Posterior cingulate gyrus (tissue), 11 donors: ENCODE measurements at regions of chr1 and their contacts with region 1.

Region 1: GRCh38 chr1:203861379-203862184 is at the start of gene SNRPE:
- DNase-seq: peak; percentile 93 to 99 (median 96)

Region 2: DNA sequence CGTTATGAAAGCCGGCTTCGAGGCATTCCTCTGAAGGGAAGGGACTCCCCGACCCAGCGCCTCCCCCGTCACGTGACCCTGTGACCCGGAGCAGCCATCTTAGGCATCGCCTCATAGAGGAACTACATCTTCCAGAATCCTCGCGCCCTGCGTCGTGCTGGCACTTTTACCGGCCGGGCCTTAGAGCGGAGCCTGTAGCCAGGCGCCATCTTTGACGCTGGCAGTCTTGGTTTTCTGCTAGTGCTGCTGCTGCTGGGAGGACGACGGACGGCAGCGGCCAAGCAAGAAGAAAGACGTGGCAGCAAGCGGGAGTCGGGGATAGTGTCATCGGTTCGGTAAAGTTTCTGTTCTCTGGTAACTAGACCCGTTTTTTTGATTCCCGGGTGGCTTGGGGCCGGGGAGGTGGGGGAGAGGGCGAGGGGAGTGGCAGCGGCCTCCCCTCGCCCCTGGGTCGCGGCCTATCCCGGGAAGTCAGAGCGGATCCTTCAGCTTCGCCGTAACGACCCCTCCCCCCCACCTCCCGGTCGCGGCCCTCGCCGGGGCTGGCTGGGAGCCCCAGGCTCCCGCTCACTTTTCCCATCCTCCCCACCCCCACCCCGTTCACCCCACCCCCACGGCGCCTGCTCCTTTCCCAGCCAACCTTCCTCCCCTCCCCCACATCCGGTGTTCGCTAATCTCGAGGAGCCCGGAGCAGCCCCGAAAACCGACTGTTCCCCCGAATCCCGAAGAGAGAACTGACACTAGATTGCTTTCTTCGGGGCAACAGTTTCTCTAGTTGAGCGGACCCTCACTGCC is 65.9 kb before region 1 on chr1 and contains the starts of genes ZBED6 and ZC3H11A:
- intact Hi-C with region 1: loop called (anchors 5 kb)
- DNase-seq: peak; percentile 99 to 100 (median 99)

Region 3: GRCh38 chr1:203823306-203823705 is 38.3 kb before region 1 on chr1:
- intact Hi-C with region 1: no loop called
- DNase-seq: no peak

Region 4: DNA sequence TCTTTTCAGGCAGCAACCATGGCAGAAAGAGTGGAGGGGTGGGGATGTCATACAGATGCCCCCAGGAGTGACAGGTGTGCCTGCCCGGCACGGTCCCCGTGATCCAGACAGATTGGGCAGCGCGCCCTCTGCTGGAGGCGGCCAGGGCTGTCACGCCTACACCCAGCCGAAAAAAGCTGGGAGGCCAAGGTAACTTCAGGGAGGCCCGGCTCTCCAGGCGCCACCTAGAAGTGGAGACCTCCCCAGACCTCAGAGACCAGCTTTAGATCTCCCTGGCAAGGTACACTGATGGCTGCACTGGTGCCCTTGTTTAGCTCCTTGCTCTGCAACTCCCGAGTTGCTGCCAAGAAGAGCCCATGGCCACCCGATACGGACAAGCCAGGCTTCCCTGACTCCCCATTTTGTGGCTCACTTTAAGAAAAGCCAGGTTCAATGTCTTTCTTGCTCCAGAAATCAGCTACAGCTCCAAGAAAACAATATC is 345.6 kb after region 1 on chr1:
- intact Hi-C with region 1: loop called (anchors 2 kb)
- DNase-seq: peak; percentile 43 to 96 (median 71)